CD4-positive, alpha-beta memory T cell (primary cell): ENCODE measurements at regions of chr10 and their contacts with region 1.

Region 1: GRCh38 chr10:128047351-128047750 is 78.9 kb downstream of the MKI67 start:
- DNase-seq: peak; percentile 78 to 92 (median 84)
- H3K4me3 ChIP-seq: peak overlapping the region; percentile 63 to 77
- H3K4me3 Mint-ChIP-seq: peak overlapping the region; percentile 86 to 99 (median 92)
- H3K27ac ChIP-seq: peak overlapping the region; percentile 83
- H3K27ac Mint-ChIP-seq: peak overlapping the region; percentile 90 to 99 (median 93)
- H3K4me1 ChIP-seq: peaks cover 48% of the 10 kb centered on the region
- H3K4me1 Mint-ChIP-seq: peaks cover 28 to 72% (median 49%) of the 10 kb centered on the region in 4 donors
- H3K27me3 ChIP-seq: no peaks in the 10 kb centered on the region
- H3K27me3 Mint-ChIP-seq: no peaks in the 10 kb centered on the region

Region 2: GRCh38 chr10:128035557-128035973 is 11.8 kb before region 1 on chr10:
- CTCF ChIA-PET with region 1: interaction called, 123 read pairs
- POLR2A ChIA-PET with region 1: interaction called, 23 read pairs
- intact Hi-C with region 1: loop called (anchors 1 kb)
- DNase-seq: peak; percentile 43 to 64 (median 52)
- H3K4me3 ChIP-seq: no peak overlapping the region
- H3K4me3 Mint-ChIP-seq: no peak overlapping the region
- H3K27ac ChIP-seq: no peak overlapping the region
- H3K27ac Mint-ChIP-seq: no peak overlapping the region
- H3K4me1 ChIP-seq: no peaks in the 10 kb centered on the region
- H3K4me1 Mint-ChIP-seq: peaks cover 0 to 4% (median 2%) of the 10 kb centered on the region in 4 donors
- H3K27me3 ChIP-seq: no peaks in the 10 kb centered on the region
- H3K27me3 Mint-ChIP-seq: no peaks in the 10 kb centered on the region

Region 3: GRCh38 chr10:128064108-128064969 is 17.0 kb after region 1 on chr10:
- CTCF ChIA-PET with region 1: interaction called, 93 read pairs
- POLR2A ChIA-PET with region 1: interaction called, 169 read pairs
- intact Hi-C with region 1: loop called (anchors 1 kb)
- DNase-seq: peak; percentile 71 to 89 (median 75)
- H3K4me3 ChIP-seq: peak overlapping the region in 1 of 2 donors; percentile 54
- H3K4me3 Mint-ChIP-seq: peak overlapping the region; percentile 71 to 92 (median 80)
- H3K27ac ChIP-seq: peak overlapping the region; percentile 67
- H3K27ac Mint-ChIP-seq: peak overlapping the region; percentile 83 to 95 (median 90)
- H3K4me1 ChIP-seq: peaks cover 56% of the 10 kb centered on the region
- H3K4me1 Mint-ChIP-seq: peaks cover 60 to 87% (median 72%) of the 10 kb centered on the region in 4 donors
- H3K27me3 ChIP-seq: no peaks in the 10 kb centered on the region
- H3K27me3 Mint-ChIP-seq: no peaks in the 10 kb centered on the region

Region 4: GRCh38 chr10:128125944-128126764 is 78.8 kb after region 1 on chr10 and contains the start of gene MKI67:
- CTCF ChIA-PET with region 1: interaction called, 3 read pairs
- POLR2A ChIA-PET with region 1: interaction called, 6 read pairs
- intact Hi-C with region 1: loop called (anchors 2 kb)
- DNase-seq: peak; percentile 87 to 92 (median 88)
- H3K4me3 ChIP-seq: peak within 1 kb of the TSS; percentile 70 to 71
- H3K4me3 Mint-ChIP-seq: peak within 1 kb of the TSS; percentile 90 to 96 (median 93)
- H3K27ac ChIP-seq: peak within 1 kb of the TSS; percentile 72
- H3K27ac Mint-ChIP-seq: peak within 1 kb of the TSS; percentile 71 to 95 (median 90)
- H3K4me1 ChIP-seq: peaks cover 42% of the 10 kb centered on the region
- H3K4me1 Mint-ChIP-seq: peaks cover 11 to 37% (median 30%) of the 10 kb centered on the region in 4 donors
- H3K27me3 ChIP-seq: peaks cover 12% of the 10 kb centered on the region
- H3K27me3 Mint-ChIP-seq: peaks cover 6 to 20% of the 10 kb centered on the region in 2 donors
- total RNA-seq, gene MKI67: 0.17 to 0.93 TPM

Region 5: DNA sequence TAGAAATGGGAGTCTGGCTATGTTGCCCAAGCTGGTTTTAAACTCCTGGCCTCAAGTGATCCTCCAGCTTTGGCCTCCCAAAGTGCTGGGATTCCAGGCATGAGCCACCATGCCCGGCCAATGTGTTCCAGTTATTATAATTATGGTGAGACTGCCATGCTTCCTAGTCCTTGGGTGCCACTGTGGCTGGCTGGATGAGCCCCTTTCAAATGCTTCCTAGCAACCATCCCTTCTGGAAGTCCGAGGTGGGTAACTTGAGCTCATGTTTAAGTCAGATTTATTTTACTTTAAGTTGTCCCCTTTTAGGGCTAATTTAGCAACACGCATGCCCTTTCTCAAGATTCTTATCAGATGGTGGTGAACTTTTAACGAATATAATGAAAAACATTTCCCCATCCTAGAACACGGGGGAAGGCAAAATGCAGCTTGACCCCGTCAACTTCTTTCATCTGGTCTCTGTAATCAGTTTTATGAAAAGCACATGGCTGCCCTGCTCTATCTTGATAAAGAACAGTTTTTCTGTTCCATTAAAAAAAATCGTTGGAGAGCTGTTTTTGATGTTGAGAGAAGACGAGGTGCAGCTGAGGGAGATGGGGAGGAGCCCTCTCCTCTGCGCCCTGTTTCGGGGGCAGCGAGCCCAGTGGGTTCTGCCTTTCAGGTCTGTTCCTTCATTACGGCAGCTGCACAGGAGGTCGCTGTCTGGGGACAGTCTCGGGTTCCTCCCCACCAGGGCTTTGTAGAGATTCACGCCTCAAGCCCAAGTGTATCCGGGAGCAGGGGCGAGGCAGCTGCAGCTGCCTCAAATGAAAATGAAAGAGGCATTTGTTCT is 139.8 kb after region 1 on chr10:
- CTCF ChIA-PET with region 1: no interaction called
- POLR2A ChIA-PET with region 1: interaction called, 20 read pairs
- intact Hi-C with region 1: no loop called
- DNase-seq: peak in 3 of 5 donors; percentile 24 to 37 (median 28)
- H3K4me3 ChIP-seq: peak overlapping the region; percentile 34 to 46
- H3K4me3 Mint-ChIP-seq: peak overlapping the region; percentile 85 to 93 (median 88)
- H3K27ac ChIP-seq: peak overlapping the region; percentile 50
- H3K27ac Mint-ChIP-seq: peak overlapping the region; percentile 87 to 97 (median 92)
- H3K4me1 ChIP-seq: peaks cover 13% of the 10 kb centered on the region
- H3K4me1 Mint-ChIP-seq: peaks cover 23 to 44% (median 31%) of the 10 kb centered on the region in 4 donors
- H3K27me3 ChIP-seq: no peaks in the 10 kb centered on the region
- H3K27me3 Mint-ChIP-seq: no peaks in the 10 kb centered on the region

Region 6: GRCh38 chr10:128310971-128311658 is 263.8 kb after region 1 on chr10:
- CTCF ChIA-PET with region 1: no interaction called
- POLR2A ChIA-PET with region 1: no interaction called
- intact Hi-C with region 1: no loop called
- DNase-seq: no peak
- H3K4me3 ChIP-seq: no peak overlapping the region
- H3K4me3 Mint-ChIP-seq: no peak overlapping the region
- H3K27ac ChIP-seq: no peak overlapping the region
- H3K27ac Mint-ChIP-seq: no peak overlapping the region
- H3K4me1 ChIP-seq: no peaks in the 10 kb centered on the region
- H3K4me1 Mint-ChIP-seq: no peaks in the 10 kb centered on the region
- H3K27me3 ChIP-seq: no peaks in the 10 kb centered on the region
- H3K27me3 Mint-ChIP-seq: no peaks in the 10 kb centered on the region

Region 7: GRCh38 chr10:128675405-128675804 is 628.1 kb after region 1 on chr10:
- CTCF ChIA-PET with region 1: no interaction called
- POLR2A ChIA-PET with region 1: no interaction called
- intact Hi-C with region 1: no loop called
- DNase-seq: no peak
- H3K4me3 ChIP-seq: no peak overlapping the region
- H3K4me3 Mint-ChIP-seq: no peak overlapping the region
- H3K27ac ChIP-seq: no peak overlapping the region
- H3K27ac Mint-ChIP-seq: no peak overlapping the region
- H3K4me1 ChIP-seq: no peaks in the 10 kb centered on the region
- H3K4me1 Mint-ChIP-seq: no peaks in the 10 kb centered on the region
- H3K27me3 ChIP-seq: no peaks in the 10 kb centered on the region
- H3K27me3 Mint-ChIP-seq: peaks cover 0 to 2% of the 10 kb centered on the region in 2 donors